Right ventricle myocardium inferior (tissue), 1 donor: ENCODE measurements at regions of chr12 and their contacts with region 1.

Region 1: DNA sequence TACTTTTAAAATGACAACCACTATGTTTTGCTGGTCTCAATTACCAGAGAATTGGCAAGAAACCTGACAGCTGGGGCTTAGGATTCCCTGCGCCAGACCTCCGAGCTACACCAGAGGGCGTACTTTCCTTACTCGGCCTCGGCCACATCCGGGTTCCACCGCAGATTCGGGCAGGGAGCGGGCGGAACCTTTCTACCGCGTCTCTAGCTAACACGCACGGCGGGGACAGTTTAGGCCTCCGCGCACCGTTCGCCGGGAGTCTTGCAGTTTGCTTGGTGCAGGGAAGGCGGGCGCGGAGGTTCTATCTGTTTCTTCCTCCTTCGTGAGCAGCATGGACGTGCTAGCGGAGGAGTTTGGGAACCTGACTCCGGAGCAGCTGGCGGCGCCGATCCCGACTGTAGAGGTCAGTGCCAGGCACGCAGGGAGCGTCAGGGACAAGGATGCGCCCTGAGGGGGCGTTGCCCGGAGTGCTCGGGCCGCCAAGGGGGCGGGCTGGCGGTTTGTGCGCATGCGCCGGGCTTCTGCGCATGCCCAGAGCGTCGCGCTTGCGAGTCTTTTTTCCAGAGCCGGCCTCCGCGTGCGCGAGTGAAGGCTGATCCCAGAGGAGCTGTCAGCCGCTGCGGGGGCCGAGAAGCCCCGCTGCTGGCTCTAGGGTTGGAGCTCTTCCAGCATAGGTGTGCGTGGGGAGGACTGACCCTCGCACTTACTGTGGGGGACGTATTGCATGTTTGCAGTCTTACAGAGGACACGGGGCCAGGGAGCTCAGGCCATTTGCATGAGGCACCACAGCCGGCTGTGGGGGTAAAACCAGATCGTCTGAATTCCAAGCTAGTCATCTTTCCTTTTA is at the start of gene POLR3B:
- DNase-seq: peak; percentile 97
- ATAC-seq: peak; percentile 95
- total RNA-seq, gene POLR3B: 7.3 TPM

Region 2: DNA sequence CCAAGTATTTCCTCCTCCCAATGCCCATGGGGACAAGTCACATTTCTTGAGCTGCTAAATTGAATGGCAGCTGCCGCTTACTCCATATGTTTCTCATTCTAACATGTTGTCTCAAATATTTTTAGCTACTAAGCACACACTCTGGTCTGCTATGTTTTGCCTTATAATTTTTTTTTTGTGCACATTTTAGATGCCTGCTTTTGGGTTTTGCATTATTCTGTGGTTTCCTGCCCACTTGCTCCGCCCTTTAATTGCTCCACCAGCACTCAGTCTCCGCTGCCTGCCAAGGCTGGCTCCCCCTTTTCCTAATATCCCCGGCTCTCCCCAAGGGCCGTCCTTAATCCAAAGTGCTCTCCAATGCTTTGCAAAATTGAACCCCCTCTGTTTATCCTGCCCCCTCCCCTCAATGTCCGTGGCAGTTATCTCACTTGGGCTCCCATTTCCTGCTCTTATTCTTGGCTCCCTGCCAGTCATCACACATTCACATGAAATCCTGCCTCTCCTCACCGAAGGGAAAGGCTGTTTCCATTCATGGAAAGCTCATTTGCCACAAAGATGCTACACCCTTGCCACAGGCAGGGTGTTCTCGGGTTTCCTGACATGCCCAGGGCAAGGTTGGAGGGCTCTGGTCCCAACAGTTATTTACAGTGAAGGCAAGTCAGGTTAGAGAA is 947.8 kb before region 1 on chr12:
- intact Hi-C with region 1: loop called (anchors 10 kb)
- DNase-seq: no peak
- ATAC-seq: peak; percentile 54

Region 3: DNA sequence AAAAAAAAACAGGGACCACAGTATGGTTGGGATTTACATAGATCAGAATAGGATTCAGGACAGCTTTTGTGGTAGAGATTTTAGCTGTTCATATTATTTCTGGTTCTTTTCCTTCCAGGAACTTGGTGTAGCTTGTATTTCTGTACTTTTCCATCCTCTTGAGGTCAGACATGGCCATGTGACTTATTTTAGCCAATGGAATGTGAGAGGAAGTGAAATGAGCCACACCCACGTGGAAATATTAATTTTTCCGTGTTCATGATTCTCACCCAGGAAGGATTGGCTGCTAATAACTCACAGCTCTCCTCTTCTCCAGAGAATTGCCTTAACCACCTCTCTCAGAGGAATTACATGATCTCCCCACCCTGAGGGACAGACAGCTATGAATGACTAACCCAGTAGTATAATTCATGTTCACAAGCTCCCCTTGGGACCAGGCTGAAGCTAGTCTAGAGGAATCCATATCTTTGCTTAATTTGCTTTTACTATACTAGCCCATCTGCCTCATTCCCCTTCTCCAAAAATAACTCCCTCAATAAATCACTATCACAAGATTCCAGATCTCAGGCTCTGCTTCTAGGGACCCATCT is 559.4 kb before region 1 on chr12:
- intact Hi-C with region 1: no loop called
- DNase-seq: no peak
- ATAC-seq: no peak

Region 4: GRCh38 chr12:106302401-106303201 is 55.2 kb before region 1 on chr12 and contains the start of gene TCP11L2:
- intact Hi-C with region 1: loop called (anchors 1 kb)
- DNase-seq: peak; percentile 96
- ATAC-seq: peak; percentile 86
- total RNA-seq, gene TCP11L2: 93.7 TPM

Region 5: DNA sequence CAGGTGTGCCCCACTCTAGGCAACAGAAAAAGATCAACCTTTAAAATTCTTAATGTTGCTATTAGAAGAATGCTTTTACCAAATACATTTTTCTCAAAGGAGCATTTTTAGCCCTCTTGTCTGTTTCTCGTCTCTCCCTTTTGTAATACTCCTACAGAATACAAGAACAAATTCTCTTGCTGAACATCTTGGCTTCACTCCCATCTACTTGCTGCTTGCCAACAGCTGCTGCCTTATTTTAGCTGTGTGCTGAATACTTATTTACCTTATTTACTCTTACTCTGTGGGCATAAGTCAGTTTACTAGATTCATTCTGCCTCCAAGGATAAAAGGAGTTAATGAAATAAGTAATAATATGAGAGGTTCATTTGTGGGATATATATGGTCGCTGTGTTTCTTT is 70.6 kb after region 1 on chr12:
- intact Hi-C with region 1: no loop called
- DNase-seq: no peak
- ATAC-seq: peak; percentile 50